ENCODE measurements at regions of chr5 and their contacts with region 1.

Region 1: GRCh38 chr5:126002222-126002897 is 420.8 kb upstream of the GRAMD2B start:
- DNase-seq: peak; percentile 87

Region 2: GRCh38 chr5:124061663-124062062 is 1940.7 kb before region 1 on chr5:
- intact Hi-C with region 1: loop called in 1 of 2 experiments (anchors 5 kb)
- DNase-seq: no peak

Region 3: DNA sequence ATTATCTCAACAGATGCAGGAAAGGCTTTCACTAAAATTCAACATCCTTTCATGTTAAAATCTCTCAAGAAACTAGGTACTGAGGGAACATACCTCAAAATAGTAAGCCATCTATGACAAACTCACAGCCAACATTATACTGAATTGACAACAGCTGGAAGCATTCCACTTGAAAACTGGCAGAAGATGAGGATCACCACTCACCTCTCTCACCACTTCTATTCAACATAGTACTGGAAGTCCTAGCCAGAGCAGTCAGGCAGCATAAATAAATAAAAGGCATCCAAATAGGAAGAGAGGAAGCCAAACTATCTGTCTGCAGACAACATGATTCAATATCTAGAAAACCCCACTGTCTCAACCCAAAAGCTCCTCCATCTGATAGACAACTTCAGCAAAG is 217.3 kb after region 1 on chr5:
- intact Hi-C with region 1: no loop called
- DNase-seq: no peak